ENCODE measurements at regions of chr16 and their contacts with region 1.

Region 1: GRCh38 chr16:84754353-84754856 is 54.6 kb downstream of the USP10 start:
- DNase-seq: peak; percentile 70
- H3K27ac ChIP-seq: peak overlapping the region; percentile 59
- CTCF ChIP-seq: peak; percentile 83

Region 2: GRCh38 chr16:84726079-84726668 is 28.2 kb before region 1 on chr16:
- CTCF ChIA-PET with region 1: no interaction called
- POLR2A ChIA-PET with region 1: no interaction called
- DNase-seq: peak; percentile 67
- H3K27ac ChIP-seq: peak overlapping the region; percentile 60
- CTCF ChIP-seq: peak; percentile 94

Region 3: DNA sequence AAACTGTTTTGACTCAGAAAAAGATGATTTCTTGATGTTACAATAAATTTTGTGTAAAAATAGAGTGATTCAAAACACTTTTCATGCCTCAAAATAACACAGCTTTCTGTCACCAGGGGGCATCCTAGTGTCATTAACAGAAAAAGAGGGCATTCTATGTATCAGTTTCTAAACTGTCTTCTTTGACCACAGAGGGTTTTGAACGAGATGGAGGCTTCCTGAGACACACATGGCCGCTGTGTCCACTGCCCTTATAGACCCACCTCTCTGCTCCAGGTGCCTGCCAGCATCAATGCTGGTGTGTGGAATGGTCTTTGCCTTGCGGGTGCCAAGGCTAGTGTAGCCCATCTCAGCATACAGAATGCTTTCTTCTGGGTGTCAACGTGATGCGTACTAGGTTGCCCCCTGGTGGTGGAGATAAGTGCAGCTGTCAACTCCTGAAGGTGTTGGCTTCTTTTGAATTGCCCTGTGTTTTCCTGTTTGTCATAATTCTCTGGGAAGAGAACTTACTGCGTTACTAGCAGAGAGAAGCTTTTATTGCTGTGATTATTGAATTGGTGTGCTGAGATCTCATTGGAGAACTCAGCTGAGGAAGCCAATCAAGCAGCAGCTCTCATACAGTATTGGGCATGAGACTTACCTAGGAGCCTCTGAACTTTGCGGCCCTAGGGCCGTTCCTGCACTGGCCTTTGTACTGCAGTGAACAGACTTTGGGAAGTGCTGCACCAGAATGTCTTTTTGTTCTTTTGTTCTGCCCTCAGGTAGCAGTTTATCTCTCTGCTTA is 16.0 kb before region 1 on chr16:
- CTCF ChIA-PET with region 1: interaction called, 16 read pairs
- POLR2A ChIA-PET with region 1: no interaction called
- DNase-seq: peak; percentile 68
- H3K27ac ChIP-seq: peak overlapping the region; percentile 70
- CTCF ChIP-seq: peak; percentile 88

Region 4: DNA sequence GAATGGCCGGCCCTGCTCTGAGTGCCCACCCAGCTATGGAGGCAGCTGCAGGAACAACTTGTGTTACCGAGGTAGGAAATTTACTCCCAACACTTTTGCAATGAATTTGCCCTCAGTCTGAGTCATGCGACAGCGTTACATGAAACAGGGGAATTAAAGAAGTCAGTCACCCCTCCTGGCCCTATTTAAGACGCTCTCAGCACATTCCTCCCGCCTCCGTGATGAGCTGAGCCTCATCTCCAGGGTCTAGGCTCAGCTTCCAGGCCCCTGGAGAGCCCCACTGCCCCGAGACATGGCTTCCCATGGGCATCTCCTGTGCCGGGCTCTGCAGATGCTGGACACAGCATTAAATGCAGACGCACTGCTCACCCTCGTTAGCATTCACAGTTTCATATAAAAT is 100.4 kb after region 1 on chr16:
- CTCF ChIA-PET with region 1: no interaction called
- POLR2A ChIA-PET with region 1: no interaction called
- DNase-seq: no peak
- H3K27ac ChIP-seq: no peak overlapping the region
- CTCF ChIP-seq: no peak

Region 5: DNA sequence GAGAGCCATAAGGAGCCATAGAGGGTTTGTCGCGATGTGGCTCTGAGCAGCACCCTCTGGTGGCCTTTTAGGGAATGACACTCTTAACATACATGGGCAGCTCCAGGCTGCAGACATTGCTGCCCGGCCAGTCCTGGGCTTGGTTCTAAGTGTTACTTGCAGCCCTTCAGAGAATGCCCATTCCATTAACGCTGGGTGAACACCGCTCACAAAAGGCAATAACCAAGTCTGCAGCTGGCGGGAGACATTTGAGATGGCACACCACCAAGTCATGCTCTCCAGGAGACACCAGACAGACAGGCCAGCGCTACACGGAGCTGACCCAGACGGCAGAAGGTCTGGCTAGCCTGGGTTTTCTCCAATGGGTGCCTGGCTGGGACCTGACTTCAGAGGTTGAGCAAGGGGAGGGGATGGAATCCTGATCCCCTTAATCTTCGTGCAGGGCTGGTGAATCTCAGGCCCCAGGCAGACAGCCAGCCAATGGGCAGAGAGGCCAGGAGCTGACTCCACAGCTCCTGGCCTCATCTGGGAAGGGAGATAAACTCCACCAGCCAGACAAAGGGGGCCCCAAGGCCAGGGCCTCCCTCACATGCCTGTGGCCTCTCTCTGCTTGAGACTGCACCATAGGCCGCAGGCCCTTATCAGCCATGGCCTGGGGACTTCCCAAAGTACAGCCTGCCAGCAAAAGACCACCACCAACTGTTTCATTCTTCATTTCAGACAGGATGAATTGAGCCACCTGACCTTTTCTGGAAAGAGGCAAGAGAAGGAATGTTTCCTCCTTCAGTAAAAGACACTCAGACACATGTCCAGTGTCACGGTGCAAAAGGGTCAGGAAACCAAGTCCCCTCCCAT is 198.2 kb after region 1 on chr16:
- CTCF ChIA-PET with region 1: interaction called, 30 read pairs
- POLR2A ChIA-PET with region 1: no interaction called
- DNase-seq: peak; percentile 77
- H3K27ac ChIP-seq: no peak overlapping the region
- CTCF ChIP-seq: peak; percentile 84

Region 6: DNA sequence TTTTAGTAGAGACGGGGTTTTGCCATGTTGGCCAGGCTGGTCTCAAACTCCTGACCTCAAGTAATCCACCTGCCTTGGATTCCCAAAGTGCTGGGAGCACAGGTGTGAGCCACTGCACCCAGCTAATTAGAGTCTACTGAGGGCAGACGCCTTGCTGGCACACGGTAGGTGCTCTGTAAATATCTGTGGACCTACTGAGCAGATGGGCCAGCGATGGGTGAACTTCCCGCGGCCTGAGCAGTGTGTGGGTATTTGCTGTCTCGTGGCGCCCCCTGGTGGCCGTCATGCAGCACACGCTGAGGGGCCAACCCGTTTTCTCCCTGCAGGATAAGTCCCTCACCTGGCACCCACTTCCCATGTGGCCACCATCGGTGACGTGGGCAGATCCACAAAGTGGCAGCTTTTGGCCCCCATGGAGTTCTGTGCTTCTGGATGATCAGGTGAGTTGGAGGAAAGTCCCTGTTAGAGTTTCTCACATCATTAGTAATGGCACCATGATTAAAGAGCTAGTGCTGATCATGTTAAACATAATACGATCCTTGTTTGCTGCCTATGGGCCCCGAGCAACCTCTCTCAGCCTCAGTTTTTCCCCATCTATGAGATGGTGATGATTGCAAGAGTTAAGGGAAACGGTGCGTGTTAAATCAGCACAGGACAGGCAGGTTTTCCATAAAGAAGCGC is 216.2 kb after region 1 on chr16:
- CTCF ChIA-PET with region 1: interaction called, 14 read pairs
- POLR2A ChIA-PET with region 1: no interaction called
- DNase-seq: peak; percentile 72
- H3K27ac ChIP-seq: no peak overlapping the region
- CTCF ChIP-seq: peak; percentile 93

Measured in RWPE1 (cell line).